ENCODE measurements at regions of chr20 and their contacts with region 1.

Region 1: DNA sequence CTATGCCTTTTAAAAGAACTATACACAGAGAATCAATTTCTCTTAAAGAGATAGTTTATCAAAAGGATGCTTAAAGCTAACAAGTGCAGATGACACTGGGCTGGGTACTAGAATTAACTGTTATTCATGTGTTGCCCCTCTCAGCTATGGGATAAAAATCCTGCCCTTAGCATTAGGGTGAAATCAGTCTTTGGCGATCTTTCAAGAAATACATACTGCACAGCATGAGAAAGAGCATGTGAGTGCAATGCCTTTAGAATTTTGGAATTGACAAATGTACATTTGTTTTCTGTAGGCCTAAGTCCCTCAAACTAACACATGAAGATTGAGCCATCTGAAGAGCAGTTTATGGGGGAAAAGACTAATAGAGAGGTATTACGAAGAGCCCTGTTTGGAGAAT is 115.4 kb downstream of the ZFP64 start:
- DNase-seq: no peak
- ATAC-seq: no peak
- H3K4me3 ChIP-seq: no peak overlapping the region
- H3K27ac ChIP-seq: no peak overlapping the region
- H3K4me1 ChIP-seq: no peaks in the 10 kb centered on the region
- H3K27me3 ChIP-seq: no peaks in the 10 kb centered on the region
- CTCF ChIP-seq: no peak

Region 2: GRCh38 chr20:51624157-51624731 is 451.9 kb before region 1 on chr20:
- intact Hi-C with region 1: loop called in 1 of 3 experiments (anchors 10 kb)
- DNase-seq: peak in 3 of 6 donors; percentile 47 to 68 (median 50)
- ATAC-seq: peak; percentile 48 to 83 (median 77)
- H3K4me3 ChIP-seq: no peak overlapping the region
- H3K27ac ChIP-seq: no peak overlapping the region
- H3K4me1 ChIP-seq: no peaks in the 10 kb centered on the region
- H3K27me3 ChIP-seq: no peaks in the 10 kb centered on the region
- CTCF ChIP-seq: peak; percentile 22 to 46 (median 38)